Caco-2 (cell line): ENCODE measurements at regions of chr14 and their contacts with region 1.

Region 1: DNA sequence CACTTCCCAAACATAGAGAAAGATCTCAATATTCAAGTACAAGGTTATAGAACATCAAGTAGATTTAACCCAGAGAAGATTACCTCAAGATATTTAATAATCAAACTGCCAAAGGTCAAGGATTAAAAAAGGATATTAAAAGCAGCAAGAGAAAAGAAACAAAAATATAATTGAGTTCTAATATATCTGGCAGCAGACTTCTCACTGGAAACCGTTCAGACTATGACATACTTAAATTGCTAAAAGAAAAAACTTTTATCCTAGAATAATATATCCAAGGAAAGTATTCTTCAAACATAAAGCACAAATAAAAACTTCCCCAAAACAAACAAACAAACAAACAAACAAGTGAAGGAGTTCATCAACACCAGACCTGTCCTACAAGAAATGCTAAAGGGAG is 92.4 kb downstream of the FSCB start:
- DNase-seq: no peak
- H3K4me3 ChIP-seq: no peak overlapping the region
- H3K4me3 Mint-ChIP-seq: no peak overlapping the region
- H3K27ac Mint-ChIP-seq: no peak overlapping the region
- H3K4me1 ChIP-seq: peaks cover 26% of the 10 kb centered on the region
- H3K4me1 Mint-ChIP-seq: peaks cover 20% of the 10 kb centered on the region
- H3K27me3 ChIP-seq: no peaks in the 10 kb centered on the region
- H3K27me3 Mint-ChIP-seq: no peaks in the 10 kb centered on the region
- CTCF ChIP-seq: no peak

Region 2: DNA sequence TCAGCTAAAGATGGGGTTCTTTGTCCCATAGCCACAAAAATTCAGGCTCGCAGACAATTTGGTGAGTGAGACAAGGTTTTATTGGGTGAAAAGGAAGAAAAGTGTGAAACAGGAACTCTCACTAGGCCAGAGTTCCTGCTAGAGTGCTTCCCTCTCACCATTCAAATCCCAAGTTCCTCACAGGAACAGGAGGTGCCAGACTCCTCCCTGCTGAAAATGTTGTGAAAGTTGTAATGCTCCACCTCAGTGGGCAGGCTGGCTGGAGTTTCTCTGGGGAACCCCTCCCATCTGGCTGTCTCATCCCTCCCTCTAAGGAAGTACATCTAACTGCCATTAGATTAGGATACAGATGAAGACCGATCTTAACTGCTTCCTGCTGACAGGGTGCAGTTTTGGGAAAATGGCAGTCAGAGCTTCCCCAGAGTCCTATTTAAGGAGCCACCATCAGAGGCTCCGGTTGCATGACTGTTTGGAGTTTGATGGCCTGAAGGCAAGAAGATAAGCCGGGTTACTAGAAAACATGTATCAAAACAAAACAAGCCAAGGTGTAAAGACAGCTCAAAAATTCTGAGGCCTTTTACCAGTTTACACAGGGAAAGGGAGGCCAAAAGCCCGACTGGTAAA is 35.2 kb before region 1 on chr14:
- CTCF ChIA-PET with region 1: no interaction called
- POLR2A ChIA-PET with region 1: no interaction called
- intact Hi-C with region 1: no loop called
- DNase-seq: no peak
- H3K4me3 ChIP-seq: no peak overlapping the region
- H3K4me3 Mint-ChIP-seq: no peak overlapping the region
- H3K27ac Mint-ChIP-seq: no peak overlapping the region
- H3K4me1 ChIP-seq: no peaks in the 10 kb centered on the region
- H3K4me1 Mint-ChIP-seq: no peaks in the 10 kb centered on the region
- H3K27me3 ChIP-seq: no peaks in the 10 kb centered on the region
- H3K27me3 Mint-ChIP-seq: no peaks in the 10 kb centered on the region
- CTCF ChIP-seq: no peak

Region 3: DNA sequence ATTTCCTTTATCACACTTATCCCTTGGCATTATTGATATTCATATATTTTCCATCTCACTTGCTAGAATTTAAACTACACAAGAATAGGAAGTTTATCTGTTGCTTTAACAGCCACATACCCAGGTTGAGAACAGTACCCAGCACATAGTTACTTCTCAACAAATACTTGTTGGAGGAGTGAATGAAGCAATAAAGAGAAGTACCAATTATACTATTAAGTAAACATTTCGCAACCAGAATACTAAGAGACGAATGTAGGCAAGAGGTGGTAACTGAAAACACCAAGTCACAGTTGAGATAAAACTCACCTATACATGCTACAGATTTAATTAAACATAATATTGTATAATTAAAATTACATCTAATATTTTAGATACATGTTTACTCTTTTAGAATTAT is 18.4 kb before region 1 on chr14:
- CTCF ChIA-PET with region 1: no interaction called
- POLR2A ChIA-PET with region 1: no interaction called
- intact Hi-C with region 1: loop called (anchors 1 kb)
- DNase-seq: no peak
- H3K4me3 ChIP-seq: no peak overlapping the region
- H3K4me3 Mint-ChIP-seq: no peak overlapping the region
- H3K27ac Mint-ChIP-seq: no peak overlapping the region
- H3K4me1 ChIP-seq: peaks cover 13% of the 10 kb centered on the region
- H3K4me1 Mint-ChIP-seq: no peaks in the 10 kb centered on the region
- H3K27me3 ChIP-seq: no peaks in the 10 kb centered on the region
- H3K27me3 Mint-ChIP-seq: no peaks in the 10 kb centered on the region
- CTCF ChIP-seq: no peak

Region 4: DNA sequence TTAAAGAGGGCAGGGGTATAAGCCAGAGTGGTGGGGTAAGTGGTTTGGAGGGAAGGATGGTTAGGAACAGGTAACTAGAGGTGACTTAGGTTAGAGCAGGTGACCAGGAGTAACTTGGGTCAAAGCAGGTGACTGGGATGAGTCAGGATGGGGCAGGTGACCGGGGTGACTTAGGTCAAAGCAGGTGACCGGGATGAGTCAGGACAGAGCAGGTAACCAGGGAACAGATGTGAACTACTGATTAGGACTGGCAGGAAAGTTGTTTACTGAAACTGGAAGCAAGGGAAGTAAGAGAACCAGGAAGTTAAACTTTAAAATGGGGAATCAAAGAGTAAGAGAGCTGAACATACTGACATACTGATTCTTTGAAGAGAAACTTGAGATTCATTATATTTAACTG is 35.0 kb after region 1 on chr14:
- CTCF ChIA-PET with region 1: no interaction called
- POLR2A ChIA-PET with region 1: no interaction called
- intact Hi-C with region 1: loop called (anchors 1 kb)
- DNase-seq: peak; percentile 47 to 59
- H3K4me3 ChIP-seq: no peak overlapping the region
- H3K4me3 Mint-ChIP-seq: peak overlapping the region; percentile 43
- H3K27ac Mint-ChIP-seq: peak overlapping the region; percentile 69
- H3K4me1 ChIP-seq: peaks cover 22% of the 10 kb centered on the region
- H3K4me1 Mint-ChIP-seq: peaks cover 25% of the 10 kb centered on the region
- H3K27me3 ChIP-seq: no peaks in the 10 kb centered on the region
- H3K27me3 Mint-ChIP-seq: no peaks in the 10 kb centered on the region
- CTCF ChIP-seq: no peak

Region 5: DNA sequence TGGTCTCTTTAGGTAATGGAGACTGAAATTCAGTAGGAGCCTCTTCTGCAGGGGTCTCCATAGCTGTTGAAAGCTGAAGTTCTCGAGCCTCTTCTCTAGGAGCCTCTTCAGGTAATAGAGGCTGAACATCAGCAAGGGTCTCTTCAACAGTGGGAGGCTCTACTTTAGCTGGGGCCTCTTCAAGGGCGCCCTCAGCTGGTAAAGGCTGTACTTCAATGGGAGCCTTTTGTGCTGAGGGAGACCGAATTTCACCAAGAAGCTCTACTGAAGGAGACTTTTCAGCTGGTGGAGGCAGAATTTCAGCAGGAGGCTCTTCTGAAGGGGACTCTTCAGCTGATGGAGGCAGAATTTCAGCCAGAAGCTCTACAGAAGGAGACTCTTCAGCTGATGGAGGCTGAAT is 90.9 kb after region 1 on chr14:
- CTCF ChIA-PET with region 1: no interaction called
- POLR2A ChIA-PET with region 1: no interaction called
- intact Hi-C with region 1: no loop called
- DNase-seq: no peak
- H3K4me3 ChIP-seq: no peak overlapping the region
- H3K4me3 Mint-ChIP-seq: no peak overlapping the region
- H3K27ac Mint-ChIP-seq: no peak overlapping the region
- H3K4me1 ChIP-seq: no peaks in the 10 kb centered on the region
- H3K4me1 Mint-ChIP-seq: no peaks in the 10 kb centered on the region
- H3K27me3 ChIP-seq: no peaks in the 10 kb centered on the region
- H3K27me3 Mint-ChIP-seq: no peaks in the 10 kb centered on the region
- CTCF ChIP-seq: no peak